ENCODE measurements at regions of chr16 and their contacts with region 1.

Region 1: GRCh38 chr16:67514382-67514828 is 14.2 kb upstream of the RIPOR1 start:
- DNase-seq: peak; percentile 94
- H3K4me3 Mint-ChIP-seq: no peak overlapping the region
- H3K27ac Mint-ChIP-seq: peak overlapping the region; percentile 84
- H3K4me1 Mint-ChIP-seq: peaks cover 12% of the 10 kb centered on the region
- H3K27me3 Mint-ChIP-seq: no peaks in the 10 kb centered on the region

Region 2: GRCh38 chr16:67470359-67470758 is 44.0 kb before region 1 on chr16:
- intact Hi-C with region 1: no loop called
- DNase-seq: no peak
- H3K4me3 Mint-ChIP-seq: no peak overlapping the region
- H3K27ac Mint-ChIP-seq: no peak overlapping the region
- H3K4me1 Mint-ChIP-seq: peaks cover 6% of the 10 kb centered on the region
- H3K27me3 Mint-ChIP-seq: no peaks in the 10 kb centered on the region

Region 3: DNA sequence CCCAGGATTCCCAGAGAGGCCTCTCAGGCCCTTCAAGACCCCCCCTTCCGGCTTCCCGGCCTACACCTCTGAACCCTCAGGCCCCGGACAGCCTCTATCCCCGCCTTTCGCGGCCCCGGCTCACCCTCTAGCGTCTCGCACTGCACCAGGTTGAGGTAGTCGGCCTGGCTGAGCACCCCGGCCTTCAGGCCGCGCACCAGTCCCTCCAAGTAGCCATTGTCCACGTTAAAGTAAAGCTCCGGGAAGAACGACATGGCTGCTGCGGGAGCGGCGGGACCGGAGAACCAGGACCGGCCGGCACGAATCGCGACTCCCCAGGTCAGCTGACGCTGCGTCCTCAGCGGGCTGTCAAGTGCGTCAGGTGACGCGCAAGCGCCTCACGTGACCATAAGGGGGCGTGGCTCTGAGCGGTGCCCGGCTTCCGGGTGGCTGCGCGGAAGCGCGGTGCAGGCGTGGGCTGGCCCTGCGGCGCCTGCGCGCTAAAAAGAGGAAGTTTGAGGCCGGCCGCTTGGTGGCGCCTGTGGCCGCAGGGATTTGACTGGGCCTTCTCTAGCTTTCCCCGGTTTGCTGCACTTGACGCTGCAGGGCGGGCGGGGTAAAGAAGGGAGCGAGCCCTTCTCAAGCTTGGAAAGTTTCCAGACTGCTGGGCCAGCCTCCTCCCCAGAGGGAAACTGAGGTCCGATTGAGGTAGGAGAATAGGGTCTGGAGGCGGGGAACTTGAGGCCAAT is 33.4 kb before region 1 on chr16 and contains the start of gene ATP6V0D1:
- intact Hi-C with region 1: loop called (anchors 1 kb)
- DNase-seq: peak; percentile 100
- H3K4me3 Mint-ChIP-seq: peak within 1 kb of the TSS; percentile 100
- H3K27ac Mint-ChIP-seq: peak within 1 kb of the TSS; percentile 97
- H3K4me1 Mint-ChIP-seq: peaks cover 17% of the 10 kb centered on the region
- H3K27me3 Mint-ChIP-seq: no peaks in the 10 kb centered on the region
- total RNA-seq, gene ATP6V0D1: 30.9 and 31.8 TPM in 2 replicates

Region 4: GRCh38 chr16:67499106-67499505 is 15.3 kb before region 1 on chr16:
- intact Hi-C with region 1: loop called (anchors 1 kb)
- DNase-seq: no peak
- H3K4me3 Mint-ChIP-seq: no peak overlapping the region
- H3K27ac Mint-ChIP-seq: no peak overlapping the region
- H3K4me1 Mint-ChIP-seq: peaks cover 16% of the 10 kb centered on the region
- H3K27me3 Mint-ChIP-seq: no peaks in the 10 kb centered on the region